ENCODE measurements at regions of chr20 and their contacts with region 1.

Region 1: GRCh38 chr20:17995967-17996819 is 27.4 kb downstream of the MGME1 start:
- DNase-seq: peak; percentile 88
- ATAC-seq: peak; percentile 29
- H3K4me3 ChIP-seq: no peak overlapping the region
- H3K27ac ChIP-seq: no peak overlapping the region
- H3K4me1 ChIP-seq: peaks cover 29% of the 10 kb centered on the region
- H3K27me3 ChIP-seq: no peaks in the 10 kb centered on the region
- CTCF ChIP-seq: peak; percentile 98

Region 2: GRCh38 chr20:17536944-17537444 is 459.2 kb before region 1 on chr20:
- CTCF ChIA-PET with region 1: no interaction called
- POLR2A ChIA-PET with region 1: no interaction called
- intact Hi-C with region 1: loop called (anchors 10 kb)
- DNase-seq: peak; percentile 91
- ATAC-seq: peak; percentile 94
- H3K4me3 ChIP-seq: no peak overlapping the region
- H3K27ac ChIP-seq: no peak overlapping the region
- H3K4me1 ChIP-seq: peaks cover 23% of the 10 kb centered on the region
- H3K27me3 ChIP-seq: no peaks in the 10 kb centered on the region
- CTCF ChIP-seq: peak; percentile 98

Region 3: DNA sequence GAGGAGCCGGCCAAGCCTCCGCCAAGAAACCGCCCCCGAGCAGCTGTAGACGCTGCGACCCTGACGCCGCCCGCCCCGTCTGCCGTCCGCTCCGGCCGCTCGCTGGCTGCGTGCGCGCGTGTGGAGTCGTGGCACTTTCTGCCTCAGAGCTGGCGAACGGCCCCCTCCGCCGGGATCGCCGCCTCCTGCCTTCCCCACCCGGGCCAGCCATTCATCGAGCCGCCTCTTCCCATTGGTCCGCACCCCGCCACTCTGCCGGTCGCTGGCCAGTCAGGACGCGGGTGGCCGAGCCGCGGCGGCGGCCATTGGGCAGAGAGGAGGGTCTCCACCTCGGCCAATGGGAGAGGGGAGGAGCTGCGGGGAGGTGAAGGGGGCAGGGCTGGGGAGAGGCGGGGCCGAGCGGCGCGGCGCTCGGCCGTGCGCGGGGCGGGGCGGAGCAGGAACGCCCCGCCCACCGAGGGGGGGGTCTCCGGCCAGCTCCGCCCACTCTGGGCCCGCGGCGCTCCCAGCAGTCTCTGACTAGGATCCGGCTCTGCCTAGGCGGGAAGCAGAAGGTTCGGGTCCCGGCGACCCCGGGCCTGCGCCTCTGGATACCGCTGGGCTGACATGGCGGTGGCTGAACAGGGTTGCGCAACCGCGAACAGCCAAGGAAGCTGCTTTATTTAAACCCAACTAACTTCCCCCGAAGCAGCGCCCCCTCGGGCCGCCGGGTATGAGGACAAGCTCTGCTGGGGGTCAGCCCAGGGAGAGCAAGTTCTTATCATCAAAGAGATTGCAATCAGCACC is 313.9 kb before region 1 on chr20 and contains the start of gene RRBP1:
- CTCF ChIA-PET with region 1: no interaction called
- POLR2A ChIA-PET with region 1: interaction called, 4 read pairs
- intact Hi-C with region 1: loop called (anchors 5 kb)
- DNase-seq: peak; percentile 98
- ATAC-seq: peak; percentile 90
- H3K4me3 ChIP-seq: peak within 1 kb of the TSS; percentile 77
- H3K27ac ChIP-seq: peak within 1 kb of the TSS; percentile 26; the same call in 1 of the 2 replicates
- H3K4me1 ChIP-seq: peaks cover 19% of the 10 kb centered on the region
- H3K27me3 ChIP-seq: peaks cover 41% of the 10 kb centered on the region
- CTCF ChIP-seq: peak; percentile 88
- total RNA-seq, gene RRBP1: 176 and 241 TPM in 2 replicates

Region 4: DNA sequence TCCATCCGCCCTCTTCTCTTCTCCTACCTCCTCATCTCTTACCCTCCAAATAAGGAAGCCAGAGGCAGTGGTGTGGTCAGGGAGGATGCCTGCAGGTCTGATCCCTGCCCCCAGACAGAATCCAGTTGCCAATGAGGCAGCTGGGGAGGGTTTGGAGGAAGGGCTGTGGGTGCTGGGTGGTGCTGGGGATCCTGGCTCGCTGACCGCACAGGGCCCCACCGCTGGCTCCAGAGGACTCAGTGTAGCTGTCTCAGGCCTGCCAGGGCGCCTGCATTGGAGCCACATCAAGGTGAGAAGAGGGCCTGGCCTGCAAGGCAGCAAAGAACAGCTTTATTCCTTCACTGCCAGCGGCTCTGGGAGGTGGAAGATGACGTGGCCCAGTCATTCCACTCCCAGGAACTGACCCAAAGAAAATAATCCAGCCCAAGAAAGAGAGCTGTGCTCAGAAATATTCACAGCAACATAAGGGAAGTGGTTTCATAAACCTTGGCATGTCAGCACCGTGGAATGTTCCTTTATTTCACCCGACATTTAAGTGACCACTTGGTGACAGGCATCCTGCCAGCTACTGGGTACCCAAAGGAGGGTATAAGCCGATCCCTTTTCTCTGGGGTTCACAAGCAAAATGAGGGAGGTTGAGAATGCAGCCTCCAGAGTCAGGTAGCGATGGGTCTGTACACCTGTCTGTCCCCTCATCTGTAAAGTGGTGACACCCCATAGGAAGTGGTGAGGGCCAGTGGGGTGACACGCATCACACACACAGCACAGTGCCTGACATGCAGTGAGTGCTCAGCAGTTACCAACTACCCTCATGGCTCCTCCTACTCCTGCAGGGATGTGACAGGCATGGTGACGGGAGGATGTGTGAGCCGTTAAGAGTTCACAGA is 152.7 kb before region 1 on chr20:
- CTCF ChIA-PET with region 1: no interaction called
- POLR2A ChIA-PET with region 1: no interaction called
- intact Hi-C with region 1: no loop called
- DNase-seq: peak; percentile 94
- ATAC-seq: peak; percentile 92
- H3K4me3 ChIP-seq: peak overlapping the region; percentile 32
- H3K27ac ChIP-seq: peak overlapping the region; percentile 86
- H3K4me1 ChIP-seq: peaks cover 38% of the 10 kb centered on the region
- H3K27me3 ChIP-seq: no peaks in the 10 kb centered on the region
- CTCF ChIP-seq: no peak

Region 5: DNA sequence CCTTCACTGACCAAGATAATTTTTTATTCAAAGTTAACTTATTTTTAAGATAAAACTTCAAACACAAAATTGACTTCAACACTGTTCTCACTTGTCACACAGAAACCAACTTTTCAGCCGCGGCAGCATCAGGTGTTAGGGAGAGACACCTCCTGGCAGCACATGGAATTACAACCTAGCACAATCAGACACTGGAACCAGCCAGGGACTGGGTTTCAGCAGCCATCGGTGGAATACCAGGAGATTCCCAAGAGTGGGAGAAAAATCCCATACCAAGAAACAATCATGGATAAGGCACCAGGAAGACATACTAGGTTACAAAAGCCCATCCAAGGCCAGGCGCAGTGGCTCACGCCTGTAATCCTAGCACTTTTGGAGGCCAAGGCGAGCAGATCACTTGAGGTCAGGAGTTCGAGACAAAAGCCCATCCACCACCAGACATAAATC is 97.6 kb before region 1 on chr20:
- CTCF ChIA-PET with region 1: no interaction called
- POLR2A ChIA-PET with region 1: no interaction called
- intact Hi-C with region 1: loop called (anchors 5 kb)
- DNase-seq: peak; percentile 86
- ATAC-seq: peak; percentile 75
- H3K4me3 ChIP-seq: no peak overlapping the region
- H3K27ac ChIP-seq: no peak overlapping the region
- H3K4me1 ChIP-seq: no peaks in the 10 kb centered on the region
- H3K27me3 ChIP-seq: no peaks in the 10 kb centered on the region
- CTCF ChIP-seq: peak; percentile 98

Region 6: DNA sequence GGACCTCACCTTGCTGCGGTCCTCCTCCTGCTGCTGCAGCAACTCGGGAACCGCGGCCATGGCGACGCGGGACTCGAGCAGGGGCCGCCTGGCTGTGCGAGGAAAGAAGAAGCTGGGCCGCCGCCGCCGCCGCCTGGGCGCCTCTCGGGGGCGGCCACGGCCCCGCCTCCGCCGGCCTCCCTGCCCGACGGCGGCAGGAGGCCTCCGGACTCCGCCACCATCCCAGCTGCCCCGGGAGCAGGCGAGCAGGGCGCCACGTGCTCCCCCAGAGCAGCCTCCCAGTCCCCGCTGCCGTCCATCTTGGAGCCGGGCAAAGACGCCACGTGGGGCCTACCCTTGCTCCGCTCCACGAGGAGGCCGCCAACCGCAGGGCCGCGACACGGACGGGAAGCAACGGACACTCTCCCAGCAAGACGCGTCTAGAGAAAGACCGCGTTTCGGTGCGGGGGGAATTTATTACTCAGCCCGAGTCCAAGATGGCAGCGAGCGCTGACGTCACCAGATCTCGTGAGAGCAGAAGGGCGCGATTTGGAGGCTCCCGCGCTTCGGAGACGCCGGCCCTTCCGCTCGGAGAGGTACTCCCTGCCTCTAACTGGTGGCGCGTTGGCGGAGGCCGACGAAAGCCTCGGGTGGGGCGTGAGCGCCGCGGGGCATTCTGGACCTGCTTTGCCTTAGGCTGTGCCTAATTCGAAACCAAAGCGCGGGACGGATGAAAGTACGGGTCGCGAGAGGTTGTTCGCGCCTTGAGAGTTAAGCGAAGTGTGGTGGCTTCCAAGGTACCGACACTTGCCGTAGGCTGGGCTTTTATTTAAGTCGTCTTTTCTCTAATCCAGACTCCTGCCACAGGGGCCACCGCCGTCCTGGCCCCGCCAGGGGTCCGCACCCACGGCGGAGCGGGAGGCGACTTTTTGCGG is 27.6 kb before region 1 on chr20 and contains the starts of genes MGME1 and SNX5:
- CTCF ChIA-PET with region 1: interaction called, 8 read pairs
- POLR2A ChIA-PET with region 1: no interaction called
- intact Hi-C with region 1: loop called (anchors 1 kb)
- DNase-seq: peak; percentile 100
- ATAC-seq: peak; percentile 84
- H3K4me3 ChIP-seq: peak within 1 kb of the TSS; percentile 74
- H3K27ac ChIP-seq: peak within 1 kb of the TSS; percentile 95
- H3K4me1 ChIP-seq: peaks cover 59% of the 10 kb centered on the region
- H3K27me3 ChIP-seq: no peaks in the 10 kb centered on the region
- CTCF ChIP-seq: no peak
- total RNA-seq, gene MGME1: 15.1 and 18.8 TPM in 2 replicates
- total RNA-seq, gene SNX5: 159 and 189 TPM in 2 replicates